ENCODE measurements at regions of chr19 and their contacts with region 1.

Region 1: GRCh38 chr19:10899151-10899653 is 27.8 kb downstream of the CARM1 start:
- DNase-seq: no peak
- H3K4me3 ChIP-seq: no peak overlapping the region
- H3K27ac ChIP-seq: peak overlapping the region; percentile 45; the same call in 1 of the 2 replicates
- H3K4me1 ChIP-seq: peaks cover 5 to 10% (median 8%) of the 10 kb centered on the region in 4 experiments
- H3K27me3 ChIP-seq: no peaks in the 10 kb centered on the region
- CTCF ChIP-seq: no peak
- EP300 ChIP-seq: no peak
- POLR2A ChIP-seq: no peak
- RAD21 ChIP-seq: no peak

Region 2: DNA sequence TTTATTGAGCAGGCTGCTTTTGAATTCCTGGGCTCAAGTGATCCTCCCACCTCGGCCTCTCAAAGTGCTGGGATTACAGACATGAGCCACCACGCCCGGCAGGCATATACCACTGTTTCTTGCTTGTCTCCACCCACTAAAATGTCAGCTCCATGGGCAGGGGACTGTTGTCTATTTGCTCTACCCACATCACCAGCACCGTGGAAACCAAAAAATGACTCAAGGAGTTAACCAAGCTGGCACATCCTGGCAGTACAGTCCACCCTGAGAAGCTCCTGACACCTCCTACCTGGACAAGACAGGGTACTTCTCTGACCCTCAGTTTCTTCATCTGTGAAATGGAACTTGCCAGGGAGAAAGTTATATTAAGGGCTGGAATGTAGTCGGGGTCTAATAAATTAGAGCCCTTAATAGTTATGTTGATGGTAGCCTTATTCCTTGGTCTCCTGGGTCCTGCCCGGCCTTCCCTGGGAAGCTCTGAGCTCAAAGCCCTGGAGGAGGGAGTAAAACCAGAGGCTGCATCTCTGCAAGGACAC is 872.0 kb before region 1 on chr19:
- CTCF ChIA-PET with region 1: no interaction called
- POLR2A ChIA-PET with region 1: no interaction called
- DNase-seq: no peak
- H3K4me3 ChIP-seq: peak overlapping the region in 3 of 4 experiments; percentile 9 to 46 (median 16); a peak in 3 of 8 replicates
- H3K27ac ChIP-seq: no peak overlapping the region
- H3K4me1 ChIP-seq: no peaks in the 10 kb centered on the region
- H3K27me3 ChIP-seq: peaks cover 0 to 3% (median 0%) of the 10 kb centered on the region in 4 experiments; a peak in 1 of 7 replicates
- CTCF ChIP-seq: no peak
- EP300 ChIP-seq: no peak
- POLR2A ChIP-seq: no peak
- RAD21 ChIP-seq: no peak

Region 3: GRCh38 chr19:10533646-10534386 is 365.4 kb before region 1 on chr19:
- CTCF ChIA-PET with region 1: no interaction called
- POLR2A ChIA-PET with region 1: no interaction called
- DNase-seq: no peak
- H3K4me3 ChIP-seq: no peak overlapping the region
- H3K27ac ChIP-seq: no peak overlapping the region
- H3K4me1 ChIP-seq: no peaks in the 10 kb centered on the region
- H3K27me3 ChIP-seq: no peaks in the 10 kb centered on the region
- CTCF ChIP-seq: no peak
- EP300 ChIP-seq: no peak
- POLR2A ChIP-seq: no peak
- RAD21 ChIP-seq: no peak

Region 4: DNA sequence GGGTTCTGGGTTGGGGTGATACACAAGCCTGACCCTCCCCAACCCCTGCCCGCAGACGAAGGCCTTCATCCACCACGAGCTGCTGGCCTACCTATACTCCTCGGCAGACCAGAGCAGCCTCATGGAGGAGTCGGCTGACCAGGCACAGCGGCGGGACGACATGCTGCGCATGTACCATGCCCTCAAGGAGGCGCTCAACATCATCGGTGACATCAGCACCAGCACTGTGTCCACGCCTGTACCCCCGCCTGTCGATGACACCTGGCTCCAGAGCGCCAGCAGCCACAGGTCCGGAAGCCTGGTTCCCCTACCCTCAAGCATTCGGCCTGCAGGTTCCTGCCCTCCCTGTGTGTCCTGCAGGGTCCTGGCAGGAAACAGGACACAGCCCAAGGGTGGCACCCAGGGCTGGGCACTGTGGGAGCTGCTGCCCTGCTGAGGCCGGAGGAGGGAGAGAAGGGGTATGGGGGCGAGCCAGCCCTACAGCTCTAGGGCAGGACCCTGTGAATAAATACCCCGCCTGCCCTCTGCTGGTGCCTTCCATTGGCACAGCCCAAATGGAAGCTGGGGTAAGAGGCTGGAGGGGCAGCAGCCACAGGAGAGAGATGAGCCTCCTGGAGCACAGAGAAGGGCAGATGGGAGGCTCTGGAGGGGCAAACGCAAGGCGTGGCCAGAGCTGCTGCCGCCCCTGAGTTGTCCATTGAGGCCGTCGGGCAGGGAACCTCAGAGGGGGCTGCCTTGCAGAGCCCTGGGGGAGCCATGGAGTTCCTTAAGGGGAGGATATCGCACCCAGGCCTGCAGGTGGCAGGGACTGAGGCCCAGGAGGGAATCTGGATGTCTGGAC is 70.0 kb before region 1 on chr19:
- CTCF ChIA-PET with region 1: no interaction called
- POLR2A ChIA-PET with region 1: no interaction called
- DNase-seq: no peak
- H3K4me3 ChIP-seq: no peak overlapping the region
- H3K27ac ChIP-seq: 0 out of 2 replicates have a peak overlapping the region, but pooled peaks have one; percentile 51
- H3K4me1 ChIP-seq: no peaks in the 10 kb centered on the region
- H3K27me3 ChIP-seq: no peaks in the 10 kb centered on the region
- CTCF ChIP-seq: peak; percentile 35 to 73 (median 38)
- EP300 ChIP-seq: no peak
- POLR2A ChIP-seq: no peak
- RAD21 ChIP-seq: peak in 1 of 2 experiments; percentile 18; a peak in 1 of 4 replicates

Region 5: GRCh38 chr19:10884274-10884673 is 14.9 kb before region 1 on chr19:
- CTCF ChIA-PET with region 1: interaction called, 29 read pairs
- POLR2A ChIA-PET with region 1: interaction called, 18 read pairs
- DNase-seq: no peak
- H3K4me3 ChIP-seq: no peak overlapping the region
- H3K27ac ChIP-seq: no peak overlapping the region
- H3K4me1 ChIP-seq: peaks cover 26 to 63% (median 53%) of the 10 kb centered on the region in 4 experiments
- H3K27me3 ChIP-seq: no peaks in the 10 kb centered on the region
- CTCF ChIP-seq: no peak
- EP300 ChIP-seq: no peak
- POLR2A ChIP-seq: no peak
- RAD21 ChIP-seq: no peak